Activated CD4-positive, alpha-beta T cell treated with anti-CD3 and anti-CD28 coated beads for 36 hours (primary cell): ENCODE measurements at regions of chr9 and their contacts with region 1.

Region 1: DNA sequence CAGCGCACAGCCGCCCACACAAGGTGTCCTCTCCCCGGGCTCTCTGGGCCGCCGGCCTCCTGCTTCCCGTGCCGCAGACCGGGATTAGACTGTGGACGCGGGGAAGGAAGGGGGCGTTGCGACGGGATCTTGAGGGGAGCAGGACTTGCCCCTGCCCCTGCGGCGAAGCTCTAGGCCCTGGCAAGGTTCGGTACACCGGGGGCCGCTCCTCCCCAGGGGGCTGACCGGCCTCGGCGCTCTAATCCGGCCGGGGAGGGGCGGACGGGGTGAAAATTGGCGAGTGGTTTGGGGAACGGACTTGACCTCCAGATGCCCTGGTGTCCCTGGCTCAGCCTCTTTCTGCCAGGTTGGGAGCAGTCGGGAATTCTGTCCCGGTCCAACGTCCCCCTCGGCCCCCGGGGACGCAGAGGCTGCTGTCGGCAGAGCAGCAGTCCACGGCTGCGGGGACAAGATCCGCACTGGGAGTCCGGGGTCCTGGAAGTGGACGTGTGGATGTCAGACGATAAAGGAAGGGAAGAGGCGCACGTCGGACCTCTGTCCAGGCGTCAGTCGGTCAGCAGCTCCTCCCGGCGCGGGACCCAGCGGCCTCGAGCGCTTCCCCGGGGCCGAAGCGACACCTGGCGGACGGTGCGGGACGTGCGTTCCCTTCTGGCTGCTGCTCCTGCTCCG is 1.9 kb upstream of the CNTFR start:
- DNase-seq: peak; percentile 89
- ATAC-seq: peak; percentile 76
- H3K4me3 Mint-ChIP-seq: peak overlapping the region; percentile 57
- H3K27ac Mint-ChIP-seq: no peak overlapping the region
- H3K4me1 Mint-ChIP-seq: peaks cover 27% of the 10 kb centered on the region
- H3K27me3 Mint-ChIP-seq: peaks cover 66% of the 10 kb centered on the region

Region 2: DNA sequence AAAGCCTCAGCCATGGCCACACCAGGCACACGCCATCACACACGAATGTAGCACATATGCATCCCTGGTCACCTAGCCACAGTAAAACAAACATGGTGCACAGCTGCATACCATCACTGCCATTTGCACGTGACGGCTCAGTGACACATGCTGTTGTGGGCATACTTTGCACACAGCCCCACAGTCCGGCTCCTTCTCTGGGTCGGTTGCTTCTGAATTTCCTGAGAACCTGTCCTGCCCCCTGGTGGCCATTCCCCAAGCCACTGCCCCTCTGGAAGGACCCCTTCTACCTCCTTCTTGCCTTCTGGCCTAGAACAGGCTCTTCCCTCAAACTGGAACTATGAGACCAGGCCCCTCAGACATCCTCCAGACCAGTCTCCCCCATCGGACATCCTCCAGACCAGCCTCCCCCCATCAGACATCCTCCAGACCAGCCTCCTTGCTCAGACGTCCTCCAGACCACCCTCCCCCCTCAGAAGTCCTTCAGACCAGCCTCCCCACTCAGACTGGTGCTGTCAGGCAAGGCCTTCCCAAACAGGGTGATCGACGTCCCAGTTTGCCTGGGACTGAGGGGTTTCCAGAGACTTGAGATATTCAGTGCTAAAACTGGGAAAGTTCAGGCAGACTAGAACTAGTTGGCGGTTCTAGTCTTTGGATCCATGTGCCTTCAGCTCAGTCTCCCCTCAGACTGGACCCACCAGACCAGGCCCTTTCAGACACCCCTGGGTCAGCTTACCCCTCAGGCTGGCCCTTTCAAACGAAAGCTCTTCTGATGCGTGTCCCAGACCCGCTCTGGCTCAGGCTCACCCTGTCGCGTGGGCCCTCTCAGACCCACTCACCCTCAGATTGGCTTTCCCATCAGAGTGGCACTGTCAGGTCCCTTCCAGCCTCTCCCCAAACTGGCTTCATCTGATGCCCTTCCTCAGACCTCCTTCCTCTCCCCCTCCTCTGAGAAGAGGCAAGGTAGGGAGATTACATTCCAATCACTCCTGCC is 44.3 kb before region 1 on chr9:
- CTCF ChIA-PET with region 1: interaction called, 8 read pairs
- POLR2A ChIA-PET with region 1: no interaction called
- intact Hi-C with region 1: loop called (anchors 1 kb)
- DNase-seq: peak; percentile 84
- ATAC-seq: peak; percentile 84
- H3K4me3 Mint-ChIP-seq: no peak overlapping the region
- H3K27ac Mint-ChIP-seq: no peak overlapping the region
- H3K4me1 Mint-ChIP-seq: no peaks in the 10 kb centered on the region
- H3K27me3 Mint-ChIP-seq: peaks cover 7% of the 10 kb centered on the region

Region 3: GRCh38 chr9:34562136-34562745 is 29.1 kb before region 1 on chr9:
- CTCF ChIA-PET with region 1: interaction called, 22 read pairs
- POLR2A ChIA-PET with region 1: no interaction called
- intact Hi-C with region 1: loop called (anchors 1 kb)
- DNase-seq: peak; percentile 69
- ATAC-seq: no peak
- H3K4me3 Mint-ChIP-seq: no peak overlapping the region
- H3K27ac Mint-ChIP-seq: no peak overlapping the region
- H3K4me1 Mint-ChIP-seq: no peaks in the 10 kb centered on the region
- H3K27me3 Mint-ChIP-seq: peaks cover 25% of the 10 kb centered on the region

Region 4: DNA sequence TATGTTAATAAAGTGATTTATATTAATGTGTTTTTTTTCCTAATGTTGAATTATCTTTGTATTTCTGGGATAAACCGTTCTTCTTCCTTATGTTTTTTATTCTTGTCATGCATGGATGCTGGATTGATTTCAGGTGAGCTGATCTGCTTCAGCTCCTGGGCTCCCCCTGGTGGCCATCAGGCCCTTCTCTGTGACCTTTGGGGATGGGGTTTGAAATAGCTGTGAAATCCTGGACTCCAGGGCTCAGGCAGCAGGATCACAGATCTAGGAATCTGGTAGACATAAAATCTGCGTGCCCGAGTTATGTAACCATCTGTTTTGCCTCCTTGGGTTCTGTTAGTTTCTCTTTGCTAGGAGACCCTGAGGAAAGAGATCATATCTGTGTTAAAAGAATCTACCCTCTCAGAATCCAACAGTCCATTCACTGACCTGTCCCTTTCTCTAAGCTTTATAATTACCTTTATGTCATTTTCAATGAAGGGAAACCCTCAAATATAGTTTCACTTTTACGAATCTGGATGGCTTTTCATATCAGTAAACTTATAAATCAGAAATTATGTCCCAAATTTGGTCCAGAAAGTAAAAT is 1291.0 kb after region 1 on chr9:
- CTCF ChIA-PET with region 1: no interaction called
- POLR2A ChIA-PET with region 1: no interaction called
- intact Hi-C with region 1: no loop called
- DNase-seq: peak; percentile 89
- ATAC-seq: peak; percentile 77
- H3K4me3 Mint-ChIP-seq: no peak overlapping the region
- H3K27ac Mint-ChIP-seq: no peak overlapping the region
- H3K4me1 Mint-ChIP-seq: no peaks in the 10 kb centered on the region
- H3K27me3 Mint-ChIP-seq: peaks cover 4% of the 10 kb centered on the region